ENCODE measurements at regions of chr15 and their contacts with region 1.

Region 1: DNA sequence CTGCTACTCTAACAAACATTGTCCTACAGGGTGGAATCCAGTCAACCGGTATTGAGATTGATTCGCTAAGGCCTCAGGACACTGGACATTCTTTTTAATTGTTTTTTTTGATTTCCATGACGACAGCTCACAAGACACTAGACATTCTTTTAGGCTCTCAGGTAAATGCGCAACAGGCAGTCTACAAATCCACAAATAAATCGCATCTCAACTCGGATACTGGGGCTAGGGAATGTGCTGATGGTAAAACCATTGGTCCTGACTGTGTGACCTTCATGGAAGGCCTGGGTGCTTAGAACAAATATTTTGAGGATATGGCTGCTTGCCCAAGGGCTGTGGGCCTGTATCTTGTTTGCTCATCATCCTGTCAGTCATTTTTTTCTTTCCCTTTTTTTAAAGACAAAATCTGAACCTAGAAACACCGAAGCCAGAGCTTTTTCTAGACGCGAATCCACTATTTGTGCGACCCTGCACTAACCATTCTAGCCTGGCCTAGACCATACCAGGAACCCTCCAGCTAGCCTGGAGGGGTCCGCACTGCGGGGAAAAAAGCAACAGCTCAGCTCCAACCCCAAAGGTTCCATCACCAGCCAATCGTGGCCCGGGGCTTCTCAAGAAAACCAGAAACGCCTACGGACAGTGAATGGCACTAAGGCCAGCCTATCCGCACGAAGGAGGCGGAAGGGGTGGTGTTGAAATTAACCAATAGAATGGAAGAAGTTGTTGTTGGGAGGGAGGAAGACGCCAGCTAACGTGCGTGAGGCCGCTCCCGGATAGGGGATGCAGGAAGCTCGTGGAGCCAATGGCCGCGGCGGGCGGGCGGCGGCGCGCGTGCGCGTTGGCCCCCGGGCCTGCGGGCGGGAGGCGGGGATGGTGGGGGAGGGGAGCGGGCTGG is 18.1 kb upstream of the CHD2 start:
- DNase-seq: peak; percentile 100
- ATAC-seq: peak; percentile 97
- H3K4me3 ChIP-seq: peak overlapping the region; percentile 56 to 85
- H3K27ac ChIP-seq: peak overlapping the region; percentile 100
- H3K4me1 ChIP-seq: peaks cover 42% of the 10 kb centered on the region
- H3K27me3 ChIP-seq: no peaks in the 10 kb centered on the region
- CTCF ChIP-seq: no peak

Region 2: GRCh38 chr15:92808978-92809879 is 72.8 kb before region 1 on chr15:
- CTCF ChIA-PET with region 1: no interaction called
- POLR2A ChIA-PET with region 1: interaction called, 84 read pairs
- in situ Hi-C with region 1: no loop called
- intact Hi-C with region 1: loop called (anchors 2 kb)
- DNase-seq: no peak
- ATAC-seq: peak; percentile 83
- H3K4me3 ChIP-seq: peak overlapping the region; percentile 44 to 69
- H3K27ac ChIP-seq: peak overlapping the region; percentile 100
- H3K4me1 ChIP-seq: peaks cover 54% of the 10 kb centered on the region
- H3K27me3 ChIP-seq: no peaks in the 10 kb centered on the region
- CTCF ChIP-seq: peak; percentile 99

Region 3: DNA sequence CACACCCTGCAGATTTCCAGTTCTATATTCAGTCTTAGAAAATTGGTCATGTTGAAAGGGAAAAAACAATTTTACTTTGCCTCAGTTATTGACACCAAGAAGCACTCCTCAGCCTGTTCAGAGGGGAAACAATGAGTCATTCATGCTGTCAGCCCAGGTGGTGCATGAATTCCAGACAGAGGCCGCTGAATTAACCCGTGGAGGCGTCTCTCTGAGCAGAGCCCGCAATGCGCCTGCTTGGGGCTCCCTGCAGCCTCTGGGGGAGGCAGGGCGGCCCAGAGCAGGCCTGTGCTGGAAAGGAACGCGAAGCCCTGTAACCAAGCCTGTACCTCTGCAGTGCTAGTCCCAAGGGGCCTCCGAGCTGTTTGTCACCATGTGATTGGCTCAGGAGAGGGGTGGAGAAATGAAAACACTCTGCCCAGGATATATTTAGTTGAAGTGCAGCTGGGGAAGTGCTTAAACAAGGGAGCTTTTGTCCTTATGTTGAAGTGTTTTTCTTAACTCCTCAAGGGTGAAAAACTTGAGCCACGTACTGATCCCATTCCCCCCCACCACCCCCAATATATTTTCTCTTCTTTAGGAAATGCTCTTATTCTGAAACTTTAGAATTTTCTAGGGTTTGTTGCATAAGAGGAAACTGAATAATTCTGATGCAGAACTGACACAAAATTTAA is 50.3 kb before region 1 on chr15:
- CTCF ChIA-PET with region 1: no interaction called
- POLR2A ChIA-PET with region 1: interaction called, 32 read pairs
- in situ Hi-C with region 1: no loop called
- intact Hi-C with region 1: no loop called
- DNase-seq: peak; percentile 77
- ATAC-seq: peak; percentile 99
- H3K4me3 ChIP-seq: peak overlapping the region; percentile 28
- H3K27ac ChIP-seq: peak overlapping the region; percentile 99
- H3K4me1 ChIP-seq: peaks cover 42% of the 10 kb centered on the region
- H3K27me3 ChIP-seq: no peaks in the 10 kb centered on the region
- CTCF ChIP-seq: no peak

Region 4: DNA sequence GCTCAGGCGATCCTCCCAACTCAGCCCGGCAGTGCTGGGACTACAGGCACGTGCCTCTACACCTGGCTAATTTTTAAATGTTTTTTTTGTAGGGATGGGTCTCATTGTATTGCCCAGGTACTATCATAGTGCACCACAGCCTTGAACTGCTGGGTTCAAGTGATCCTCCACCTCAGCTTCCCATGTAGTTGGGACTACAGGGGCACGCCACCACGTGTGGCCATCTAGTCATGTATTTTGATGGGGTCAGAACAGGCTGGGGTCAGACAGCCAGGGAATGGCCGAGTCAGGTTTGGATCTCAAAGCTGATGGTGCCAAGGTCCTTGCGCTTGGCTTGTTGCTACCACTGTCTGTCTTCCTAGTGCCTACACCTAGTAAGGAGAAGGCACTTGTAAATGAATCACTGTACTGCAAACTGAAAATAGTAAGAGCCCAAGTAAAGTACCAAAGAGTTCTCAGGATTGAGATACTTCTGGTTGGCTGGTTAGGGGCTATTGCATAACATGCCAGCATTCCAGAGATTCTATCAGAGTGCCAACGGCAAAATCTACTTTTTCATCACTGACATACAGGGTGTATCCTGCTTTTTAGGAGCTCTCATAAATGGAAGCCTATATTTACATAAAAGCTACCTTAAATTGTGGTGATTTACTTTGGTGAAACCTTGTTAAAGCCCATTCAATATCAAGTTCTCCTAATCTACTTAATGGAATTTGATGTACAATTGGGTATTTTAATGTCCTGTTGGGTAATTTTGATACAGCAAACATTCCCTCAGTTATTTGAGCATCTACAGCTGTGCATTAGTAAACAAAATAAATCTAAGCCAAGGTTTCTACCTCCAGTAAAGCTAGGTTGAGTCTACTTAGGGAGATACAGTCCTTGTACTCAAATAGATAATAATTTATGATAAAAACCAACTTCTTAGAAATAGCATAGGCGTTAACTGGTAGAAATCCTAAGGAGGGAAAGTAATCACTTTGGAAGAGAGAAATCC is 12.8 kb before region 1 on chr15:
- CTCF ChIA-PET with region 1: no interaction called
- POLR2A ChIA-PET with region 1: interaction called, 11 read pairs
- in situ Hi-C with region 1: no loop called
- intact Hi-C with region 1: no loop called
- DNase-seq: no peak
- ATAC-seq: peak; percentile 61
- H3K4me3 ChIP-seq: no peak overlapping the region
- H3K27ac ChIP-seq: peak overlapping the region; percentile 82
- H3K4me1 ChIP-seq: peaks cover 19% of the 10 kb centered on the region
- H3K27me3 ChIP-seq: no peaks in the 10 kb centered on the region
- CTCF ChIP-seq: no peak

Region 5: DNA sequence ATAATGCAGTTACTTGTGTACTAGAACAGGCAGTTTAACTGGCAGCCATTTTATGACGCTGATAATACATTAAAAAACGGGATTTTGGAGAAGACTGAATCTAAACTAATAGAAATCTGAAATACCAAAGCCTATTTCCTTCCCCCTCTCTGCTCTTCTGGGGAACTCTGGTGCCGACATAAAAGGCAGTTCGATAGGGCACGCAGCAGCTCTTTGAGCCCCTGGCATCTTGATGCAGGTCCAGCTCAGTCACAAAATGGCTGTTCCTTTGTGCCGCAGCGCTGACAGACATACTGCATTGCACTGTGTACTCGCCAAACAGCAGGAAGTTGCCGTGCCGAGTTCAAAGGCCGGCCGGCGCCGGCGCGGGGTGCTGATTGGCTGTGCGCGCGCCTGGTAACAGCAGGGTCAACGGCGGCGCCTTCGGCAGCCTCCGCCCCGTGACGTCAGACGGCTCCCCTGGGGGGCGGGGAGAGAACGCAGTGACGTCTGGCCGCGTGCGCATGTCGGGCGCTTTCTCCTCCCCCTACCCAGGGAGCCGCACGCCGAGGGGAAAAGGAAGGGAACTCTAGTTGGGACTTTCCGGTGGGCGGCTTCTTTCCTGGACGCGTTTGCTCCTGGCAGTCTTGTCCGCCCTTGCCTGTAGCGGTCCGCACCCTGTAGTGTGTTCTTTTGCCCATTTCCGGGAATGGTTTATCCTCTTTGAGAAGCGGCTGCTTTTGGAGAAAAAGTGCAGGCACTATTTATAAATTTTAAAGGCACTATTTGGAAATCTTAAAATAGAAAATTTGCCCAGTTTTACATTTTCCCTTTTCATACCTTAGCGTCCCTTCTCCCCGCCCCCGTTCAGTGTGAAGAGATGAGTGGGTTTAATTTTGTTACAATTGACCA is 22.1 kb after region 1 on chr15:
- CTCF ChIA-PET with region 1: interaction called, 8 read pairs
- POLR2A ChIA-PET with region 1: interaction called, 26 read pairs
- in situ Hi-C with region 1: no loop called
- intact Hi-C with region 1: no loop called
- DNase-seq: peak; percentile 91
- ATAC-seq: peak; percentile 91
- H3K4me3 ChIP-seq: peak overlapping the region; percentile 68 to 71
- H3K27ac ChIP-seq: peak overlapping the region; percentile 100
- H3K4me1 ChIP-seq: peaks cover 53% of the 10 kb centered on the region
- H3K27me3 ChIP-seq: no peaks in the 10 kb centered on the region
- CTCF ChIP-seq: no peak

Region 6: DNA sequence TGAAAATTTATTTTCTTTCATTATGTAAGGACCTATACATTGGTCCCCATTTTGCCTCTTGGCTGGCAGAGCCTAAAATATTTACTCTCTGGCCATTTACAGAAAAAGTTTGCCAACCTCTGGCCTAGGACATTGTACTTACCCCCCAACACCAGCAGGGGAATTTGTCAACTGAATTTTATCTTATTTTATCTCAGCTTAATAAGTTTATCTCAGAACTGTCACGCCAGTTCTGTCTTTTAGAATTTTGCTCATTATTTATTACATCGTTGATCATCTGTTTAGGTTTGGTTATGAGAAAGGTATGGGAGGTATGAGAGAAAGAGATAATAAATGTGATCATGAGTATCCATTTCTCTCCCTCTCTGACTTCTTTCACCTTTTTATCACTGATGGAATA is 56.3 kb after region 1 on chr15:
- CTCF ChIA-PET with region 1: no interaction called
- POLR2A ChIA-PET with region 1: no interaction called
- in situ Hi-C with region 1: no loop called
- intact Hi-C with region 1: no loop called
- DNase-seq: no peak
- ATAC-seq: no peak
- H3K4me3 ChIP-seq: no peak overlapping the region
- H3K27ac ChIP-seq: no peak overlapping the region
- H3K4me1 ChIP-seq: peaks cover 9% of the 10 kb centered on the region; the same call in 1 of the 2 replicates
- H3K27me3 ChIP-seq: no peaks in the 10 kb centered on the region
- CTCF ChIP-seq: peak; percentile 27; the same call in 1 of the 2 replicates